HepG2 (cell line): ENCODE measurements at regions of chr18 and their contacts with region 1.

Region 1: GRCh38 chr18:51110073-51110803 is 80.2 kb downstream of the SMAD4 start:
- DNase-seq: peak; percentile 15
- ATAC-seq: peak; percentile 99
- H3K4me3 ChIP-seq: peak overlapping the region in 1 of 3 experiments; percentile 61; a peak in 2 of 6 replicates
- H3K27ac ChIP-seq: no peak overlapping the region
- H3K4me1 ChIP-seq: peaks cover 10% of the 10 kb centered on the region
- H3K27me3 ChIP-seq: no peaks in the 10 kb centered on the region
- CTCF ChIP-seq: peak; percentile 99
- EP300 ChIP-seq: no peak
- POLR2A ChIP-seq: no peak
- RAD21 ChIP-seq: peak; percentile 98

Region 2: GRCh38 chr18:51171625-51172259 is 61.5 kb after region 1 on chr18:
- CTCF ChIA-PET with region 1: no interaction called
- POLR2A ChIA-PET with region 1: no interaction called
- in situ Hi-C with region 1: no loop called
- intact Hi-C with region 1: no loop called
- DNase-seq: no peak
- ATAC-seq: no peak
- H3K4me3 ChIP-seq: no peak overlapping the region
- H3K27ac ChIP-seq: no peak overlapping the region
- H3K4me1 ChIP-seq: no peaks in the 10 kb centered on the region
- H3K27me3 ChIP-seq: no peaks in the 10 kb centered on the region
- CTCF ChIP-seq: no peak
- EP300 ChIP-seq: no peak
- POLR2A ChIP-seq: no peak
- RAD21 ChIP-seq: no peak

Region 3: DNA sequence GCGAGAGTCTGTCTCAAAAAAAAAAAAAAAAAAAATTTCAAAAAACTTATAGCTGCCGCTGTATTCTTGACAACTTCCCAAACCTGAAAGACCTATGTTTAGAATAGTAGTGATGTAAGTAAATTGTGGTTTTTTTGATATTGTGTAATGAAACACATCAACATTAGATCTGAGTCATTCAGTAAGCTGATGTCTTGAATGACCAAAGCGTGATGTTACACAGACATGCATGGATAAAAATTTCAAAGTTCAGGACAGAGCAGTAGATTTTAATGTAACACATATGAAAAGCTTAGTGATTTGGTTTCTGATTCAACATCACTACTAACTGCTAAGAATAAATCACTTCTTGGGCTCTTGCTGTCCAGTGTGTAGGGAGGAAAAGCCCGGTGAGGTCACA is 156.5 kb after region 1 on chr18:
- CTCF ChIA-PET with region 1: no interaction called
- POLR2A ChIA-PET with region 1: no interaction called
- in situ Hi-C with region 1: no loop called
- intact Hi-C with region 1: no loop called
- DNase-seq: no peak
- ATAC-seq: no peak
- H3K4me3 ChIP-seq: no peak overlapping the region
- H3K27ac ChIP-seq: no peak overlapping the region
- H3K4me1 ChIP-seq: no peaks in the 10 kb centered on the region
- H3K27me3 ChIP-seq: no peaks in the 10 kb centered on the region
- CTCF ChIP-seq: no peak
- EP300 ChIP-seq: no peak
- POLR2A ChIP-seq: no peak
- RAD21 ChIP-seq: no peak

Region 4: DNA sequence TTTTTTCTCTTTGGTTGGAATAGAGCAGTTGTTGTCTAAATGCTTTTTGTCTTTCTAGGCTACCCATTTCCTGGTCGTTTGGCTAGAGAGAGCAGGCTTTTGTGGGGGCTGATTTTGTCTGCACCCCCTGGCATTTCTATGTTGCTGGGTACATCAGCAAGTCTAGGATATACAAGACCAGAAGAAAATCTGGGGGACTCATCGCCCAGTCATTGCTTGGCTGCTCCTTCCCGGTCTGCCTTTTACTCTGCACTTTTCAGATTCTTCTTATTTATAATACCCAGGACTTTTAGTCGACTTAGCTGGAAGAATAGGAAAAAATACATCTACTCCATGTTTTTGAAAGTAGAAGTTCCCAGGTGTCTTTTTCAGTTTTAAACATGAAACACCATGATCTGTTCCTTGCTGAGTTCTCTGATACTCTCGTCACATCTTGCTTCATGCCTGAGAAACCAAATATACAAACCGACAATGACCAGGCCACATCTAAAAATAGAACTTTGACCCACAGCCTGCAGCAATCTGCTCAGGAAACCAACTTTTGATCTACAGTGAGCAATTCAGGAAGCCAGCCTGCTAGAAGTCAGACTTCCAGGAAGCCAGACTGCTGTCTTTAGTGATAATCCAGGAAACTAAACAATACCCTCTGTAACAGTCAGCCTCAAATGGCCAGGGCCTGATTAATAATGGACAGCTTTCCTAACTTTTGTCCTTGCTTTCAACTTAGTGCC is 251.1 kb after region 1 on chr18:
- CTCF ChIA-PET with region 1: no interaction called
- POLR2A ChIA-PET with region 1: no interaction called
- in situ Hi-C with region 1: no loop called
- intact Hi-C with region 1: loop called (anchors 5 kb)
- DNase-seq: peak; percentile 60
- ATAC-seq: peak; percentile 85
- H3K4me3 ChIP-seq: peak overlapping the region in 2 of 3 experiments; percentile 9 to 23; a peak in 3 of 6 replicates
- H3K27ac ChIP-seq: peak overlapping the region; percentile 55
- H3K4me1 ChIP-seq: peaks cover 29% of the 10 kb centered on the region
- H3K27me3 ChIP-seq: 0 out of 5 replicates have a peak, but pooled peaks cover 0 to 2% of the 10 kb centered on the region in 2 experiments
- CTCF ChIP-seq: no peak
- EP300 ChIP-seq: peak in 1 of 2 experiments; percentile 63; a peak in 2 of 4 replicates
- POLR2A ChIP-seq: no peak
- RAD21 ChIP-seq: no peak

Region 5: GRCh38 chr18:51383116-51383515 is 272.9 kb after region 1 on chr18:
- CTCF ChIA-PET with region 1: interaction called, 8 read pairs
- POLR2A ChIA-PET with region 1: no interaction called
- in situ Hi-C with region 1: loop called (anchors 5 kb)
- intact Hi-C with region 1: loop called (anchors 2 kb)
- DNase-seq: no peak
- ATAC-seq: no peak
- H3K4me3 ChIP-seq: no peak overlapping the region
- H3K27ac ChIP-seq: no peak overlapping the region
- H3K4me1 ChIP-seq: no peaks in the 10 kb centered on the region
- H3K27me3 ChIP-seq: no peaks in the 10 kb centered on the region
- CTCF ChIP-seq: no peak
- EP300 ChIP-seq: no peak
- POLR2A ChIP-seq: no peak
- RAD21 ChIP-seq: no peak

Region 6: GRCh38 chr18:51621113-51621863 is 511.1 kb after region 1 on chr18:
- CTCF ChIA-PET with region 1: no interaction called
- POLR2A ChIA-PET with region 1: no interaction called
- in situ Hi-C with region 1: no loop called
- intact Hi-C with region 1: loop called (anchors 2 kb)
- DNase-seq: peak; percentile 21
- ATAC-seq: peak; percentile 71
- H3K4me3 ChIP-seq: no peak overlapping the region
- H3K27ac ChIP-seq: no peak overlapping the region
- H3K4me1 ChIP-seq: no peaks in the 10 kb centered on the region
- H3K27me3 ChIP-seq: peaks cover 0 to 5% of the 10 kb centered on the region in 2 experiments; a peak in 1 of 5 replicates
- CTCF ChIP-seq: peak; percentile 78
- EP300 ChIP-seq: no peak
- POLR2A ChIP-seq: no peak
- RAD21 ChIP-seq: peak; percentile 43; the same call in 1 of the 2 replicates

Region 7: DNA sequence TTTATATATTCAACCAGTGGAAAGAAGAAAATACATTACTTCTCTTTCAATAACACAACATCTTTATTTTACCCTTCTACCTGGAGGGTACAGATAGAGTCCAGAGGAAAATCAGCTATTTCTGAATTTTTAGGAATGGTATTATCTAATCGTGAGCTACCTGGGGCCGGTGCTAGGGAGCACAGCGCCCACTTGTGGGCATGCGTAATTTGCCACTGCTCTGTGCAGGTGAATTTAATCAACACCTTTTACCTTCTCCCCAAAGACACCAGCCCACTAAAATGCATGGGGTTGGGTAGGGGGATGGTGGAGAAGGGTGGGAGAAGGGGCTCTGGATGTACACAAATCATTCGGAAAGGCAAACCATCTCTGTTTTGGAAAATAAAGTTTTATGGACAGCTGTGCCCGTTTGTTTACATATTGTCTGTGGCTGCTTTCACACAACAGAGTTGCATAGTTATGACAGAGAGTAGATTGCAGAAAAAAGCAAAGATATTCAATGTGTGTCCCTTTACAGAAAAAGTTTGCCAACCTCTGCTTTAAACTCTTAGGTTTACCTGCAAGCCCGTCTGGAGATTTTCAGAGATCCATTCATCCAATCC is 1178.3 kb after region 1 on chr18:
- CTCF ChIA-PET with region 1: interaction called, 8 read pairs
- POLR2A ChIA-PET with region 1: no interaction called
- in situ Hi-C with region 1: loop called (anchors 25 kb)
- intact Hi-C with region 1: loop called (anchors 5 kb)
- DNase-seq: peak; percentile 17
- ATAC-seq: peak; percentile 85
- H3K4me3 ChIP-seq: no peak overlapping the region
- H3K27ac ChIP-seq: no peak overlapping the region
- H3K4me1 ChIP-seq: no peaks in the 10 kb centered on the region
- H3K27me3 ChIP-seq: no peaks in the 10 kb centered on the region
- CTCF ChIP-seq: peak; percentile 82
- EP300 ChIP-seq: no peak
- POLR2A ChIP-seq: no peak
- RAD21 ChIP-seq: peak; percentile 64

Region 8: DNA sequence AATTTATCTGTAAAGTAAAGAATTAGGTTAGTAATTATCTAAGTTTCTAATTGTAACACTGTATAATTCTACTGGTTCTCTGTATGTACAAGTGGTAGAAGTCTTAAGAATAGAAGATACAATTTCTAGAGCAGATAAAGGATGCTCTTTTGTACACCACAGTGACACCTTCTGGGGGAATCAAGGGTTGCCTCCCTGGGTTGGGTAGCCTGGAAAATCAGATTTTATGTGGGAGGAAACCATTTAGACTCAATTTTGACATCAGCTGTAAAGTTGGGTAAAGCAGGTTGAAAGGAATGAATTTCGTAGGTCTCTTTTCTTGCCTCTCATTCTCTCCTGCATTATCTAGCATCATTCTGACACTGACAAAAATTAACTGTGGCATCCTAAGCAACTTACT is 1584.6 kb after region 1 on chr18:
- CTCF ChIA-PET with region 1: no interaction called
- POLR2A ChIA-PET with region 1: no interaction called
- in situ Hi-C with region 1: loop called (anchors 25 kb)
- intact Hi-C with region 1: no loop called
- DNase-seq: no peak
- ATAC-seq: peak; percentile 37; the same call in 1 of the 3 replicates
- H3K4me3 ChIP-seq: no peak overlapping the region
- H3K27ac ChIP-seq: no peak overlapping the region
- H3K4me1 ChIP-seq: no peaks in the 10 kb centered on the region
- H3K27me3 ChIP-seq: no peaks in the 10 kb centered on the region
- CTCF ChIP-seq: no peak
- EP300 ChIP-seq: no peak
- POLR2A ChIP-seq: no peak
- RAD21 ChIP-seq: no peak